H1 (cell line): ENCODE measurements at regions of chr18 and their contacts with region 1.

Region 1: GRCh38 chr18:23515911-23516546 is 12.7 kb downstream of the RMC1 start:
- DNase-seq: peak; percentile 51 to 82
- H3K4me3 ChIP-seq: no peak overlapping the region
- H3K27ac ChIP-seq: no peak overlapping the region
- H3K4me1 ChIP-seq: no peaks in the 10 kb centered on the region
- H3K27me3 ChIP-seq: no peaks in the 10 kb centered on the region
- CTCF ChIP-seq: peak; percentile 88 to 99 (median 98)
- EP300 ChIP-seq: no peak
- POLR2A ChIP-seq: no peak
- RAD21 ChIP-seq: peak; percentile 64 to 75

Region 2: DNA sequence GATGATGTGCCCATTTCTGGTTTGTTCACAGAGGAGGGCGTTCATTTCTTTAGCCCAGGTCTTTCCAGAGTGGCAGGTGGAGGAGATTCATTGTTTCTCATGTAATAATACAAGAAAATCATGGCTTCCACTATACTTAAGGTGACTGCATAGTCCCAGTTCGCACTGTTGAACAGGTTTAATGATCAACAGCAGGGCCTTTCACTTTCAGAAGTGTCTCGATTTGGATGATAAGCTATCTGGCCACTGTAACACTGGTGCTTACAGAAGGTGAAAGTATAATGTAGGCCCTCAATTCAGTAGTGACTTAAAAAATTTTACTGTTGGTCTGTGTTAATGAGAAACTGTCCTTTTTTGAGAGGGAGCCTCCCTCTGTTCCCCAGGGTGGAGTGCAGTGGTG is 11.3 kb before region 1 on chr18:
- CTCF ChIA-PET with region 1: interaction called, 11 read pairs
- POLR2A ChIA-PET with region 1: no interaction called
- DNase-seq: no peak
- H3K4me3 ChIP-seq: peak overlapping the region in 3 of 4 experiments; percentile 80 to 99 (median 83); a peak in 2 of 8 replicates
- H3K27ac ChIP-seq: no peak overlapping the region
- H3K4me1 ChIP-seq: peaks cover 2 to 6% (median 4%) of the 10 kb centered on the region in 4 experiments; a peak in 5 of 7 replicates
- H3K27me3 ChIP-seq: peaks cover 0 to 13% (median 5%) of the 10 kb centered on the region in 4 experiments; a peak in 5 of 7 replicates
- CTCF ChIP-seq: no peak
- EP300 ChIP-seq: no peak
- POLR2A ChIP-seq: no peak
- RAD21 ChIP-seq: no peak

Region 3: GRCh38 chr18:23529597-23529996 is 13.6 kb after region 1 on chr18:
- CTCF ChIA-PET with region 1: interaction called, 22 read pairs
- POLR2A ChIA-PET with region 1: no interaction called
- DNase-seq: no peak
- H3K4me3 ChIP-seq: no peak overlapping the region
- H3K27ac ChIP-seq: no peak overlapping the region
- H3K4me1 ChIP-seq: no peaks in the 10 kb centered on the region
- H3K27me3 ChIP-seq: no peaks in the 10 kb centered on the region
- CTCF ChIP-seq: no peak
- EP300 ChIP-seq: no peak
- POLR2A ChIP-seq: no peak
- RAD21 ChIP-seq: no peak

Region 4: GRCh38 chr18:23703057-23703986 is 187.3 kb after region 1 on chr18:
- CTCF ChIA-PET with region 1: interaction called, 13 read pairs
- POLR2A ChIA-PET with region 1: no interaction called
- DNase-seq: no peak
- H3K4me3 ChIP-seq: no peak overlapping the region
- H3K27ac ChIP-seq: no peak overlapping the region
- H3K4me1 ChIP-seq: no peaks in the 10 kb centered on the region
- H3K27me3 ChIP-seq: no peaks in the 10 kb centered on the region
- CTCF ChIP-seq: peak in 2 of 3 experiments; percentile 53 to 68; a peak in 3 of 4 replicates
- EP300 ChIP-seq: no peak
- POLR2A ChIP-seq: no peak
- RAD21 ChIP-seq: peak; percentile 88 to 90